ENCODE measurements at regions of chr12 and their contacts with region 1.

Region 1: DNA sequence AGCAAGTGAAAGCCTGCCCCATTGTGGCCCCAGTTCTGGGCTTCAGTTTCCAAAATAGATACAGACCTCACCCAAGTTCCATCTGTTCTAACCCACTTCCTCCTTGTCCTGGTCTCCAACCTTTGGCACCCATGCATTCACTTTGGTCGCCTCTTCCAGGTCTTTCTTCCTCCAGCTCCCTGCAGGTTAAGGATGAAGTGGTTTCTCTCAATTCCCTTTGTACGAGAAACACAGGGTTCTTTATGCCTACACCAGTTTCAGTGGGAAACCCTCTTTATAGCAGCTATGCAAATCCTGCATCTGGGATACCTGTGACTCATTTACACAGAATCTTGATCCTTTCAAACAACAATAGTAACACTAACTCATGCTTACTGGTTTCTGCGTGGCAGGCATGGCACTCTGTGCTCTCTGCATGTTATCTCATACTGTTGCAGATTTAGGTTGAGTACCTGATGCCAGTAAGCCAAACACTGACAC is 110.6 kb upstream of the AMIGO2 start:
- DNase-seq: no peak
- ATAC-seq: no peak
- H3K4me3 ChIP-seq: no peak overlapping the region
- H3K4me3 Mint-ChIP-seq: peak overlapping the region; percentile 95
- H3K27ac ChIP-seq: no peak overlapping the region
- H3K27ac Mint-ChIP-seq: peak overlapping the region; percentile 97 to 98
- H3K4me1 ChIP-seq: peaks cover 46% of the 10 kb centered on the region
- H3K4me1 Mint-ChIP-seq: peaks cover 78% of the 10 kb centered on the region in 2 donors
- H3K27me3 ChIP-seq: no peaks in the 10 kb centered on the region
- H3K27me3 Mint-ChIP-seq: no peaks in the 10 kb centered on the region
- CTCF ChIP-seq: no peak

Region 2: GRCh38 chr12:47079468-47079980 is 110.8 kb before region 1 on chr12 and contains the starts of genes AMIGO2 and PCED1B:
- intact Hi-C with region 1: loop called (anchors 5 kb)
- DNase-seq: peak; percentile 47 to 73
- ATAC-seq: peak; percentile 47 to 67 (median 60)
- H3K4me3 ChIP-seq: peak within 1 kb of the TSS; percentile 94
- H3K4me3 Mint-ChIP-seq: peak within 1 kb of the TSS; percentile 100
- H3K27ac ChIP-seq: peak within 1 kb of the TSS; percentile 74
- H3K27ac Mint-ChIP-seq: peak within 1 kb of the TSS; percentile 82 to 95
- H3K4me1 ChIP-seq: peaks cover 18% of the 10 kb centered on the region
- H3K4me1 Mint-ChIP-seq: peaks cover 54% of the 10 kb centered on the region in 2 donors
- H3K27me3 ChIP-seq: no peaks in the 10 kb centered on the region
- H3K27me3 Mint-ChIP-seq: no peaks in the 10 kb centered on the region
- CTCF ChIP-seq: no peak
- total RNA-seq, gene AMIGO2: 8.0 to 9.9 (median 8.1) TPM
- total RNA-seq, gene PCED1B: 30.2 to 35.9 (median 33.3) TPM

Region 3: DNA sequence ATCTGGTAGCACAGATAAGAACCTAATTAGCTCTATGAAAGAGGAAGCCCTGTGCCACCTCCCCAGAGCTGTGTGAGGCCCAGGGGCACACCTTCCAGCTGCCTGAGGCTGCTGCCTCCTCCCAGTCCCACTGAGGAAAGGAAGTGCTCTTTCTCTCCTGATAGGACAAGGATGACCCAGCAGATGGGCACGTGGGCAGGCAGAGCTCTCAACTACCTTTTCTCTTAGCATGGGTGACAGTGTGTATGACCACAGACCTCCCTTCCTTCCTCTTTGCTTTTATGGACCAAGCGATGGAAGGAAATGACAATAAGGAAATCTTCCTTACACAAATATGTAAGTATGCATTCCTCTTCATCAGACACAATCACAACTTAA is 17.0 kb after region 1 on chr12:
- intact Hi-C with region 1: loop called (anchors 2 kb)
- DNase-seq: peak; percentile 35 to 68
- ATAC-seq: peak; percentile 58 to 78 (median 63)
- H3K4me3 ChIP-seq: no peak overlapping the region
- H3K4me3 Mint-ChIP-seq: peak overlapping the region; percentile 63
- H3K27ac ChIP-seq: peak overlapping the region; percentile 82
- H3K27ac Mint-ChIP-seq: peak overlapping the region; percentile 97 to 99
- H3K4me1 ChIP-seq: peaks cover 60% of the 10 kb centered on the region
- H3K4me1 Mint-ChIP-seq: peaks cover 70 to 78% of the 10 kb centered on the region in 2 donors
- H3K27me3 ChIP-seq: no peaks in the 10 kb centered on the region
- H3K27me3 Mint-ChIP-seq: no peaks in the 10 kb centered on the region
- CTCF ChIP-seq: no peak